Naive thymus-derived CD4-positive, alpha-beta T cell (primary cell): ENCODE measurements at regions of chr2 and their contacts with region 1.

Region 1: GRCh38 chr2:190979906-190980629 is 33.9 kb downstream of the STAT1 start:
- DNase-seq: no peak
- ATAC-seq: no peak
- H3K4me3 ChIP-seq: no peak overlapping the region
- H3K4me3 Mint-ChIP-seq: peak overlapping the region in 9 of 10 donors; percentile 16 to 79 (median 55)
- H3K27ac ChIP-seq: peak overlapping the region; percentile 54
- H3K27ac Mint-ChIP-seq: peak overlapping the region; percentile 62 to 98 (median 92)
- H3K4me1 ChIP-seq: peaks cover 0 to 31% of the 10 kb centered on the region in 2 donors
- H3K4me1 Mint-ChIP-seq: peaks cover 15 to 77% (median 63%) of the 10 kb centered on the region in 7 donors
- H3K27me3 ChIP-seq: no peaks in the 10 kb centered on the region
- H3K27me3 Mint-ChIP-seq: no peaks in the 10 kb centered on the region

Region 2: DNA sequence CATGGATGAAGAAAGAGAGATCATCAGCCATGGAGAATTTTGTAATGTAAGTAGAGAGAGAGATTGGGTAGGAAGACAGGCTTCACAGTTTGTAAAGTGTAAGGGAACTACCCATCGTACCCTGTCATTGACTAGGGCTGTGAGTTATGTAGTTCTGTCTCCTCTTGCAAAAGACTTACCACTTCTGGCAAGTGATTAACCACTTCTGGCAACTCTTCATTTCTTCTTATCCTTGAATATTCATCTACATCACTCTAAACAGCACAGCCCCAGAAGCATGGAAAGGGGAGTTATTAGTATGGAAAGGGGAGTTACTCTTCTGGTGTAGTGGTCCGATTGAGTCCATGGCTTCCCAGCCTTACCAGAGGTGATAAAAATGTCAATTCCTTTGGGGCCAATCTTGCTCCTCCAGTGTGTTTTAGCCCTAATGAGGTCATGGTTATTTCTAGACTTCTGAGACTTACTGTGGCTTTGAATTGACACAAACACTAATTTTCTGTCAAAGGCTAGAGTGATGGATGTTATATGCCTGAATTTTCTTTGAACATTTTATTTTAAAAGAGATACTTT is 18.1 kb before region 1 on chr2:
- CTCF ChIA-PET with region 1: no interaction called
- POLR2A ChIA-PET with region 1: interaction called, 4 read pairs
- intact Hi-C with region 1: loop called in 1 of 2 experiments (anchors 2 kb)
- DNase-seq: no peak
- ATAC-seq: no peak
- H3K4me3 ChIP-seq: no peak overlapping the region
- H3K4me3 Mint-ChIP-seq: no peak overlapping the region
- H3K27ac ChIP-seq: no peak overlapping the region
- H3K27ac Mint-ChIP-seq: peak overlapping the region; percentile 28 to 85 (median 61)
- H3K4me1 ChIP-seq: no peaks in the 10 kb centered on the region
- H3K4me1 Mint-ChIP-seq: peaks cover 13 to 69% (median 42%) of the 10 kb centered on the region in 7 donors
- H3K27me3 ChIP-seq: no peaks in the 10 kb centered on the region
- H3K27me3 Mint-ChIP-seq: no peaks in the 10 kb centered on the region

Region 3: GRCh38 chr2:191020221-191020741 is 40.2 kb after region 1 on chr2:
- CTCF ChIA-PET with region 1: no interaction called
- POLR2A ChIA-PET with region 1: interaction called, 13 read pairs
- intact Hi-C with region 1: loop called in 1 of 2 experiments (anchors 5 kb)
- DNase-seq: peak; percentile 89 to 99 (median 94)
- ATAC-seq: peak; percentile 88
- H3K4me3 ChIP-seq: peak overlapping the region; percentile 78
- H3K4me3 Mint-ChIP-seq: no peak overlapping the region
- H3K27ac ChIP-seq: peak overlapping the region; percentile 82
- H3K27ac Mint-ChIP-seq: no peak overlapping the region
- H3K4me1 ChIP-seq: peaks cover 44 to 48% of the 10 kb centered on the region in 2 donors
- H3K4me1 Mint-ChIP-seq: peaks cover 11 to 46% (median 32%) of the 10 kb centered on the region in 7 donors
- H3K27me3 ChIP-seq: no peaks in the 10 kb centered on the region
- H3K27me3 Mint-ChIP-seq: peaks cover 0 to 2% (median 0%) of the 10 kb centered on the region in 5 donors